Sciatic nerve (tissue), 2 donors: ENCODE measurements at regions of chr6 and their contacts with region 1.

Region 1: DNA sequence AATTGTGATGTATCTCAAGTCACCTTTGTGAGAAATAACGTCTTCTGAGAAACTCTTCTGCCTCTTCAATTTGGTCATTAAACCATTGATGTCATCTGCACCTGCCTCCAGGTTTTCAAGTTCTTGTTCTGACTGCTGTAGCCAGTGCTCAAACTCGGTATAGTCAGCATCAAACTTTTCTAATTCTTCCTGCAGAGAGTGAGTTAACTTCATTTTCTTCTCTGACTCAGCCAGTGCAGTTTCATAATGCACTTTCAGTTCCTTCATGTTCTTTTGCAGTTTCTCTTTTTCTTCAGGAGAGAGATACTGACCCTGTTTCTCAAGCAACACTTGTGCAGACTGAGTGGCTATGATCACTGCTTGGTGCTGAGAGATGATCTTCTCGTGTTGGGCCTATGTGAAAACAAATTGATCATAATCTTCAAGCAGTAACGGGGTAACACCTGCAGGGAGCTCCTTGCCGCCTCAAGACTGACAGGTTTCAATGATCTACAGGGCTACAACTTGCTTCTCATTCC is 48.8 kb downstream of the DST start:
- DNase-seq: no peak
- ATAC-seq: peak; percentile 52

Region 2: DNA sequence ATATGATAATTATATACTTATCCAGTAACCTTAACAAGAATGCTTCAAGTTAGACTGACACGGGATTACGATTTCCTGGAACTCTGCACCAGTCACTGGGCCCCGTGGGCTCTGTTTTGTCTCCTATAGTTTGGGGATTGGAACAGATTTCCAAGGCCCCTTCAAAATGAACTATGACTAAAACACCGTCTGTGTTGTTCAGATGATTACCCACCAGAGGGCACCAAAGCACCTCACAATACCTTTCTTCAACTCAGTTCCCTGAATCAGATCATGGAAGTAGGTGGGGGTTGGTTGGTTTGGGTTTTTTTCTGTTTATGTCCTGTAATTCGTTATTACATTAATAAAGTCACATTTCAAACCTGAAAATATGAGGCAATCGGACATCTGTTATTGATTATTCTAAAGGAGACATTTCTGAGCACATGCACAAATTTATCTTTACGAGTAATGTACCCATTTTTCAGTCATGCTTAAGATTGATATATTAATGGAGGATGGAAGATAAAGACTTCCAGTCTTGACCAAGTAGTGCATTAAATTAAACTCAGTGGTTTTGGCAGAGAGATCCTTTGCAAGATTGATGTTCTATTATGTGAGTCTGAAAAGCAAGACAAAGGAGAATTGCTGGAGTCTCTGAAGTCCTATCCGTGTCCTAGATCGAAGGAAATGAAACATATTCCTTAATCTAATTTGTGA is 234.5 kb before region 1 on chr6:
- intact Hi-C with region 1: loop called (anchors 5 kb)
- DNase-seq: peak; percentile 76
- ATAC-seq: peak; percentile 85

Region 3: GRCh38 chr6:56555438-56555872 is 38.4 kb before region 1 on chr6:
- intact Hi-C with region 1: no loop called
- DNase-seq: no peak
- ATAC-seq: no peak

Region 4: DNA sequence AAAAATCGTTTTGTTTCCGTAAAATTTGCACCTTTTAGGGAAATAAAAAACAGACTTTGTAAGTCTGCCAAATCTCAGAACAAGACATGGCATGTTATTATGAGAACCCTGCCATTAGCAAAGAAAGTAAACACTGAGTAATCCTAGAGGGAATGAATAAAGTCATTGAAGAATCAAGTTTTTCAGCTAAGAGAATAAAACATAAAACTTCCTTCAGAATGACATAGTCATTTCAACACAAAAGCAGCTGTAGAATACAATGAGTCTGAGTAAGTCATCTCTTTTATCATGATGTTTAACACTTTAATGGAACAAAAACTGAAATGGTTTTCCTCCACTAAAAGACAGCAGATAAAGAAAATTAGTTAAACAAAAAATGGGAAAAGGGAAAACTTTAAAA is 59.1 kb after region 1 on chr6:
- intact Hi-C with region 1: no loop called
- DNase-seq: no peak
- ATAC-seq: peak; percentile 70

Region 5: DNA sequence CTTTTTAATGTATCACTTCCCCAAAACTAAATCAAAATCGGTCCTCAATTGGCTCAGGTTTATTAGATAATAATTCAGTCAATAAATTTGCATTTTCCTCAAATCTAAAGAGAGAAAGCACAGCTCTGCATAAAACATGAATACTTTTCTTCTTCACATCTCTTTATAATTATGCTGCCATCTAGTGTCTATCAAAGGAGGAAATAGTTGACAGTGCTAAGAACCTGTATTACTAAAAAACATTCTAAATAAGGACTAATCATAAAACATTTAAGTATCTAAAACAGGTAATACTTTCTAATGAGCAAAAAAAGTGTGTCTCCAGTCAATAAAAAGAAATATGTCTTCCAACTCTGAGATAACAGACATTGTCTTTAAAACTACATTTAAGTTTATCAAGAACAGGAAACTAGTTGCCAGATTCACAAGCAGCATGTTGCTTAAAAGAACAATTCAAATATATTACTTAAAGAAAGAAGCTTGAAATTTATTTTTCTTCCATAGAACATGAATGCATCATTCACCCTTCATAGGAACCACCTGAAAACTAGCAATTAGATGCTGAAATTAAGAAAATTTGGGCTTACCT is 105.3 kb after region 1 on chr6:
- intact Hi-C with region 1: no loop called
- DNase-seq: no peak
- ATAC-seq: peak; percentile 75

Region 6: GRCh38 chr6:57048577-57048976 is 454.7 kb after region 1 on chr6:
- intact Hi-C with region 1: no loop called
- DNase-seq: no peak
- ATAC-seq: no peak